ENCODE measurements at regions of chr10 and their contacts with region 1.

Region 1: GRCh38 chr10:83834096-83834495 is 305.2 kb upstream of the GHITM start:
- DNase-seq: no peak
- ATAC-seq: no peak
- H3K4me3 ChIP-seq: no peak overlapping the region
- H3K27ac ChIP-seq: no peak overlapping the region
- H3K4me1 ChIP-seq: no peaks in the 10 kb centered on the region
- H3K27me3 ChIP-seq: no peaks in the 10 kb centered on the region
- CTCF ChIP-seq: no peak

Region 2: GRCh38 chr10:83816942-83817341 is 17.2 kb before region 1 on chr10:
- CTCF ChIA-PET with region 1: no interaction called
- POLR2A ChIA-PET with region 1: no interaction called
- in situ Hi-C with region 1: no loop called
- intact Hi-C with region 1: loop called (anchors 1 kb)
- DNase-seq: no peak
- ATAC-seq: no peak
- H3K4me3 ChIP-seq: no peak overlapping the region
- H3K27ac ChIP-seq: no peak overlapping the region
- H3K4me1 ChIP-seq: no peaks in the 10 kb centered on the region
- H3K27me3 ChIP-seq: no peaks in the 10 kb centered on the region
- CTCF ChIP-seq: no peak

Region 3: GRCh38 chr10:83896219-83896618 is 62.1 kb after region 1 on chr10:
- CTCF ChIA-PET with region 1: no interaction called
- POLR2A ChIA-PET with region 1: no interaction called
- in situ Hi-C with region 1: no loop called
- intact Hi-C with region 1: no loop called
- DNase-seq: no peak
- ATAC-seq: no peak
- H3K4me3 ChIP-seq: no peak overlapping the region
- H3K27ac ChIP-seq: no peak overlapping the region
- H3K4me1 ChIP-seq: no peaks in the 10 kb centered on the region
- H3K27me3 ChIP-seq: no peaks in the 10 kb centered on the region; the same call in 1 of the 2 replicates
- CTCF ChIP-seq: no peak

Measured in Panc1 (cell line).